Naive thymus-derived CD4-positive, alpha-beta T cell (primary cell): ENCODE measurements at regions of chr17 and their contacts with region 1.

Region 1: DNA sequence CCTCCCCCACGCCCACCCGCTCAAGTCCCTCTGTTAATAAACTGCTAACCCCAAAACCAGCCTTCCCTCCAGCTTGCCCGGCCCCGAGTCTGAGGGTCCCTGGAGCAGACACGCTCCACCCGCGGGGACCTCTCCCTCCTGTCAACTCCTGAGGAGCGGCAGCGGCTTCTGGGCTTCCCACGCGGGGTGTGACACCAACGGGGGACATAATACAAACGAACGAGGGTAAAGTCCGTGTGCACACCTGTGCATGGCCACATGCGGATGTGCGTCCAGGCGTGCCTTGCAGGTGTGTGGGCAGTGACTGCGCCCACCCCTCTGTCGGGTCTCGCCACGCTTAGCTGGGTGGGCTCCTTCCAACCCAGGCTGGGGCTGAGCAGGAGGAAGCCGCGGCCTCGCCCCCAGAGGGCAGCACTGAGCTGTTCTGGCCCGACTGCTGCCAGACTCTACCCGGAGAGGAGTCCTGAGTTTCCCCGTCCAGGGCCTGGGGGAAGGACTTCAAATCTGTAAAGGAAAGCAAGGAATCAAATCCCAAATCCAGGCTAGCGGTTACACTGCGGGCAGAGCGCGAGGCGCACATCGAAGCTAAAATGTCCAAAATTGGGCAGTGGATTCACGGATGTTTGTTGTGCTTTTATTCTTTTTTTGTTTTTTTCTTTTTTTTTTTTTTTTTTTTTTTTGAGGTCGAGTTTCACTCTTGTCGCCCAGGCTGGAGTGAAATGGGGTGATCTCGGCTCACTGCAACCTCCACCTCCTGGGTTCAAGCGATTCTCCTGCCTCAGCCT is 24.2 kb upstream of the KRT17 start:
- DNase-seq: peak; percentile 70 to 93 (median 83)
- ATAC-seq: peak; percentile 93
- H3K4me3 ChIP-seq: peak overlapping the region; percentile 87
- H3K4me3 Mint-ChIP-seq: peak overlapping the region in 9 of 10 donors; percentile 63 to 86 (median 81)
- H3K27ac ChIP-seq: peak overlapping the region; percentile 24
- H3K27ac Mint-ChIP-seq: peak overlapping the region in 7 of 9 donors; percentile 28 to 82 (median 77)
- H3K4me1 ChIP-seq: peaks cover 8 to 12% of the 10 kb centered on the region in 2 donors
- H3K4me1 Mint-ChIP-seq: peaks cover 6 to 14% (median 9%) of the 10 kb centered on the region in 7 donors
- H3K27me3 ChIP-seq: no peaks in the 10 kb centered on the region
- H3K27me3 Mint-ChIP-seq: no peaks in the 10 kb centered on the region

Region 2: GRCh38 chr17:40803617-40804082 is 845.0 kb before region 1 on chr17:
- CTCF ChIA-PET with region 1: interaction called, 3 read pairs
- POLR2A ChIA-PET with region 1: no interaction called
- intact Hi-C with region 1: loop called (anchors 1 to 5 kb)
- DNase-seq: peak; percentile 34 to 74 (median 54)
- ATAC-seq: peak; percentile 90
- H3K4me3 ChIP-seq: no peak overlapping the region
- H3K4me3 Mint-ChIP-seq: peak overlapping the region in 1 of 10 donors; percentile 33
- H3K27ac ChIP-seq: no peak overlapping the region
- H3K27ac Mint-ChIP-seq: no peak overlapping the region
- H3K4me1 ChIP-seq: no peaks in the 10 kb centered on the region
- H3K4me1 Mint-ChIP-seq: peaks cover 0 to 4% (median 3%) of the 10 kb centered on the region in 7 donors
- H3K27me3 ChIP-seq: peaks cover 0 to 4% of the 10 kb centered on the region in 2 donors
- H3K27me3 Mint-ChIP-seq: peaks cover 33 to 51% (median 48%) of the 10 kb centered on the region in 5 donors

Region 3: GRCh38 chr17:40909351-40909750 is 739.3 kb before region 1 on chr17:
- CTCF ChIA-PET with region 1: interaction called, 32 read pairs
- POLR2A ChIA-PET with region 1: no interaction called
- intact Hi-C with region 1: loop called (anchors 1 kb)
- DNase-seq: peak; percentile 29 to 70 (median 56)
- ATAC-seq: peak; percentile 93
- H3K4me3 ChIP-seq: no peak overlapping the region
- H3K4me3 Mint-ChIP-seq: no peak overlapping the region
- H3K27ac ChIP-seq: no peak overlapping the region
- H3K27ac Mint-ChIP-seq: no peak overlapping the region
- H3K4me1 ChIP-seq: no peaks in the 10 kb centered on the region
- H3K4me1 Mint-ChIP-seq: no peaks in the 10 kb centered on the region
- H3K27me3 ChIP-seq: peaks cover 5 to 7% of the 10 kb centered on the region in 2 donors
- H3K27me3 Mint-ChIP-seq: peaks cover 26 to 45% (median 36%) of the 10 kb centered on the region in 5 donors

Region 4: GRCh38 chr17:41496820-41497408 is 151.7 kb before region 1 on chr17:
- CTCF ChIA-PET with region 1: no interaction called
- POLR2A ChIA-PET with region 1: no interaction called
- intact Hi-C with region 1: no loop called
- DNase-seq: peak; percentile 19 to 61 (median 48)
- ATAC-seq: peak; percentile 88
- H3K4me3 ChIP-seq: no peak overlapping the region
- H3K4me3 Mint-ChIP-seq: peak overlapping the region in 3 of 10 donors; percentile 30 to 59 (median 52)
- H3K27ac ChIP-seq: no peak overlapping the region
- H3K27ac Mint-ChIP-seq: peak overlapping the region in 4 of 9 donors; percentile 38 to 72 (median 57)
- H3K4me1 ChIP-seq: peaks cover 0 to 9% of the 10 kb centered on the region in 2 donors
- H3K4me1 Mint-ChIP-seq: peaks cover 21 to 29% (median 23%) of the 10 kb centered on the region in 7 donors
- H3K27me3 ChIP-seq: no peaks in the 10 kb centered on the region
- H3K27me3 Mint-ChIP-seq: peaks cover 0 to 8% (median 0%) of the 10 kb centered on the region in 5 donors

Region 5: DNA sequence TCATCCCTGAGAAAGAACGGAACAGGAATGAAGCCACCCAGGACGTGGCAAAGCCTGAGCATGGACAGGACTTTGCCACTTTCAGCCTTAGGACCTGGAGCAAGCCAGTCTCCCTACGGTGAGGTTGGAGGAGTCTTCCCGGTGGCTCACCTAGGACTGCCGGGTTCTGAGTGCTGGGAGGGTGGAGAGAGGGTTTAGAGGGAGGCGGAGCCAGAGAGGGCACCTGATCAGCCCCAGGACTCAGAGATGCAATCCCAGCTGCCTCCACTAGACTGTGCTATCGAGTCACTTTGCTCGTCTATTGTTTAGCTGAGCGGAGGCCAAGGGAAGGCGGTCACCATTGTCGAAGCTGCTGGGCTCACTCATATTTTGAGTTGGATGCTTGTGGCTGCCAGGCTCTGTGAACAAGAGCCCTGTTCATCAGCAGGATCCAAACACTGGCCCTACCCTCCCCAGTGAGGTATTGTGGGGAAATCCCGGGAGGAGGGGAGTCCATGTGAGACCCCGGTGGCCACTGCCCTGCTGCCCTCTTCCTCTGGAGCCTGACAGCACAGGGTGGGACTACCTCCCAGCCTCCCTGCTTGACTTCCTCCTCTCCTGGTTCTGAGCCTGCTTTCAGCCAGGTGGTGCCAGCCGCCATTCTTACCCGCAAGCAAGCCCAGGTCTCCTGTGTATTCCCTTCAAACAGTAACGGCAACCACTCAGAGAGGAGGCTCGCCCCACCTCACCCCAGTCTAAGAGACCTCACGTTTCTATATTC is 68.9 kb before region 1 on chr17:
- CTCF ChIA-PET with region 1: no interaction called
- POLR2A ChIA-PET with region 1: no interaction called
- intact Hi-C with region 1: loop called in 1 of 2 experiments (anchors 2 kb)
- DNase-seq: peak in 8 of 9 donors; percentile 12 to 71 (median 36)
- ATAC-seq: peak; percentile 90
- H3K4me3 ChIP-seq: no peak overlapping the region
- H3K4me3 Mint-ChIP-seq: no peak overlapping the region
- H3K27ac ChIP-seq: no peak overlapping the region
- H3K27ac Mint-ChIP-seq: no peak overlapping the region
- H3K4me1 ChIP-seq: no peaks in the 10 kb centered on the region
- H3K4me1 Mint-ChIP-seq: peaks cover 0 to 3% (median 0%) of the 10 kb centered on the region in 7 donors
- H3K27me3 ChIP-seq: peaks cover 0 to 4% of the 10 kb centered on the region in 2 donors
- H3K27me3 Mint-ChIP-seq: peaks cover 22 to 52% (median 28%) of the 10 kb centered on the region in 5 donors

Region 6: DNA sequence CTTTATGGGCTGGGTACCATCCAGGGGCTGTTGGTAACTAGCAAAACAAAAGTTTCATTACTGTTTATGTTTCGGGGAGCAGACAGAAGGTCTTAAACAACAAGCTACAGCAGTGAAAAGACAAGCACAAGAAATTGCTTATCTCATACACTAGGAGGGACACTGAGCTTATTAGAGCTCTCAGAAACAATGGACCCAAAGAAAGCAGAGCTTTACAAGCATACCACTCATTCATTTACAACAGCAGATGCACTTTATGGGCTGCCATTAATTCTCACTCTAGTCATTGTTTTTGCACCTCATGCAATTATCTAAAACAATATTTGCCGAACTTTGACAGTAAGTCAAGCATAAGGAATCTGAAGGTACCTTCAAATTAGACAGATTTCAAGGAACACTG is 46.1 kb before region 1 on chr17:
- CTCF ChIA-PET with region 1: no interaction called
- POLR2A ChIA-PET with region 1: no interaction called
- intact Hi-C with region 1: no loop called
- DNase-seq: no peak
- ATAC-seq: no peak
- H3K4me3 ChIP-seq: no peak overlapping the region
- H3K4me3 Mint-ChIP-seq: no peak overlapping the region
- H3K27ac ChIP-seq: no peak overlapping the region
- H3K27ac Mint-ChIP-seq: no peak overlapping the region
- H3K4me1 ChIP-seq: no peaks in the 10 kb centered on the region
- H3K4me1 Mint-ChIP-seq: no peaks in the 10 kb centered on the region
- H3K27me3 ChIP-seq: no peaks in the 10 kb centered on the region
- H3K27me3 Mint-ChIP-seq: peaks cover 15 to 40% (median 29%) of the 10 kb centered on the region in 5 donors

Region 7: GRCh38 chr17:41615454-41615853 is 33.1 kb before region 1 on chr17:
- CTCF ChIA-PET with region 1: no interaction called
- POLR2A ChIA-PET with region 1: no interaction called
- intact Hi-C with region 1: no loop called
- DNase-seq: no peak
- ATAC-seq: no peak
- H3K4me3 ChIP-seq: no peak overlapping the region
- H3K4me3 Mint-ChIP-seq: no peak overlapping the region
- H3K27ac ChIP-seq: no peak overlapping the region
- H3K27ac Mint-ChIP-seq: no peak overlapping the region
- H3K4me1 ChIP-seq: no peaks in the 10 kb centered on the region
- H3K4me1 Mint-ChIP-seq: no peaks in the 10 kb centered on the region
- H3K27me3 ChIP-seq: no peaks in the 10 kb centered on the region
- H3K27me3 Mint-ChIP-seq: peaks cover 0 to 10% (median 0%) of the 10 kb centered on the region in 5 donors